Naive thymus-derived CD4-positive, alpha-beta T cell (primary cell): ENCODE measurements at regions of chr16 and their contacts with region 1.

Region 1: GRCh38 chr16:53457670-53458069 is 23.4 kb downstream of the RBL2 start:
- DNase-seq: peak; percentile 13 to 94 (median 89)
- ATAC-seq: peak; percentile 91
- H3K4me3 ChIP-seq: peak overlapping the region; percentile 38
- H3K4me3 Mint-ChIP-seq: peak overlapping the region; percentile 80 to 93 (median 88)
- H3K27ac ChIP-seq: peak overlapping the region; percentile 65
- H3K27ac Mint-ChIP-seq: peak overlapping the region; percentile 88 to 99 (median 96)
- H3K4me1 ChIP-seq: peaks cover 79 to 81% of the 10 kb centered on the region in 2 donors
- H3K4me1 Mint-ChIP-seq: peaks cover 57 to 100% (median 89%) of the 10 kb centered on the region in 7 donors
- H3K27me3 ChIP-seq: no peaks in the 10 kb centered on the region
- H3K27me3 Mint-ChIP-seq: peaks cover 0 to 2% (median 0%) of the 10 kb centered on the region in 5 donors

Region 2: DNA sequence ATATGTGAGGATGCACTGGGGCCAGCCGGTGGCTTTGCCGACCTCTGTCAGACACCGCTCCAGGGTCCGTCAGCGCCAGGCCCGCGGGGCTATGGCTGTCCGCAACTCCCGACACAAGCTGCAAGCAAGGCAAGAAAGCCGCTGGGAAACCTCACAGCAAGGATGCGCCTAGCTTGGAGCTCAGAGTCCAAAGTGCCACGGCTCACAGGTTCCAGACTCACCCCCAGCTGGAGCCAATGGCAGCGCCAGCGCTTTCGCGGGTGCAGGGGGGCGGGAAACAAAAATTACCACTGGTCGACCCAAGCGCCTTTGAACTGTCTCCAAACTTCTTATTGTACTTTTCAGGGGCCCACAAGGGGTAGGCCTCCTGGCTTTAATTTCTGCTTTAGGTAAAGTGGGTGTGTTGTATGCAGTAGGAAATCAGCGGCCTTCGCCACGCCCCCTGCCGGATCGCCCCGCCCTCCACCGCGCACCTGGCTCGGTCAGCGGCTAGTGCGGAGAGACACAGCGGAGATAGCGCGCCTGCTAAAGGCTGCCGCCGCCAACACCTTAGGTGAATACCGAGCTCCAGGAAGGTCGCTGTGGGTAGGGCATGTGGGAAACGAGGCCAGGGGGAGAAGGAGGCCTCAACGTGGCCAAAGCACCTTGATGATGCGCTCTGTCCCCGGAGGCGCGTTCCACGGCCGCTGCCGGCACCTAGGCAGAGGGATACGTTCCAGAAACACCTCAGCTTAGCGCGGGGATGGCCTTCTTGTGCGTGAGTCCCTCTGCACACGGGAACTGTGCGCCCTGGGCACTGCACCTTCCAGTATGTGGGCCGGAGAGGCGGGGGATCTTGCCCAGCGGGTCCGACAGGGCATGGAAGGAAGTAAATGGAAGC is 84.4 kb before region 1 on chr16:
- CTCF ChIA-PET with region 1: no interaction called
- POLR2A ChIA-PET with region 1: interaction called, 8 read pairs
- intact Hi-C with region 1: loop called in 1 of 2 experiments (anchors 1 kb)
- DNase-seq: peak; percentile 64 to 87 (median 84)
- ATAC-seq: peak; percentile 96
- H3K4me3 ChIP-seq: peak overlapping the region; percentile 84
- H3K4me3 Mint-ChIP-seq: peak overlapping the region in 1 of 10 donors; percentile 86
- H3K27ac ChIP-seq: peak overlapping the region; percentile 67
- H3K27ac Mint-ChIP-seq: peak overlapping the region in 8 of 9 donors; percentile 48 to 95 (median 88)
- H3K4me1 ChIP-seq: peaks cover 4 to 7% of the 10 kb centered on the region in 2 donors
- H3K4me1 Mint-ChIP-seq: peaks cover 11 to 44% (median 20%) of the 10 kb centered on the region in 7 donors
- H3K27me3 ChIP-seq: no peaks in the 10 kb centered on the region
- H3K27me3 Mint-ChIP-seq: peaks cover 0 to 32% (median 0%) of the 10 kb centered on the region in 5 donors

Region 3: DNA sequence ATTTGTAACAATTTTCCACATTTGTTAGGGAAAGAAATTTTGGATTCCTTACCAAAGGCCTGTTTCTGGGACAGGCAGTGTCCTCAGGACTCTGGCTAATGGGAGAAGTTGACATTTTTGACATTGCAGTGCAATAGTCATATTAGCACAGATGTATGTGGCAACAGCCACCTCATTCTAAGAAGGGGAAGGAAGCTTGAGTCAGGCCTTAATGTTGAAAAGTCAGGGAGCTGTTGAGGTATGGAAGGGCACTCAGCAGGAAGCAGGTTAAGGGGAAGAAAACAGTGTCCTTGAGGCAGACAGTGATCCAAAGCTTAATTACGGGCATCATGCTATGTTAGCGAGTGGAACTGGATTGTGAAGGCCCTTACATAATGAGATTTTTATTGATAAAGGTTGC is 24.5 kb after region 1 on chr16:
- CTCF ChIA-PET with region 1: no interaction called
- POLR2A ChIA-PET with region 1: interaction called, 19 read pairs
- intact Hi-C with region 1: no loop called
- DNase-seq: no peak
- ATAC-seq: peak; percentile 86
- H3K4me3 ChIP-seq: no peak overlapping the region
- H3K4me3 Mint-ChIP-seq: peak overlapping the region in 2 of 10 donors; percentile 32 to 33
- H3K27ac ChIP-seq: no peak overlapping the region
- H3K27ac Mint-ChIP-seq: peak overlapping the region in 8 of 9 donors; percentile 36 to 90 (median 78)
- H3K4me1 ChIP-seq: peaks cover 3 to 4% of the 10 kb centered on the region in 2 donors
- H3K4me1 Mint-ChIP-seq: peaks cover 15 to 64% (median 38%) of the 10 kb centered on the region in 7 donors
- H3K27me3 ChIP-seq: no peaks in the 10 kb centered on the region
- H3K27me3 Mint-ChIP-seq: no peaks in the 10 kb centered on the region

Region 4: DNA sequence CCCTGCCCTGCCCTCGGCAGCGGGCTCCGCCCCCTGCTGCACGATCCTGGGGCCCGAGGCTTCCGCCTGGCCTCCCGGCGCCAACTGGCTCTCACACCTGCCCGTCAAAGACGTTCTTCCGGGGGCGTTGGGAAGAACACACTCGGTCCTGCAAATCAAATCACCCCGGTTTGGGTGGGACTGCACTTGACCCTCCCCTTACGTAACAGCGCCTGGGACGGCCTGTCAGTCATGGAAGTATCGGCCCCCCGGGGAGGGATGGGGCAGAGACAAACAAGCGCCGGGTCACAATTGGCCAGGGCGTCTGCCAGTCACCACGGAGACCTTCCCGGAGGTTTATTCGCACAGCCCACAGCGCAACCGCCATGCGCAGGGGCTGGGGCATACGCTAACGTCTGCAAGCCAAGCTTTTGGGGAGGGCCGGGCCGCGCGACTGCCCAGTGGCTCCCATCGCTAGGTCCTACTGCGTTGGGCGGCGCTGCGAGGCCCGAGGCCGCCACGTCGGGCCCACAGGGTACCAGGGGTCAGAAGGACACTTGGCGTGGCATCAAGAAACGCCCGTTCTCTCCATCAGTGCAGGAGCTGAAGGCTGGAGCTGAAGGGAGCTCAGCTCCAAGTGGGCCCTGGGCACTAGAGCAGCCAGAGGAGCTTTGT is 45.7 kb after region 1 on chr16:
- CTCF ChIA-PET with region 1: no interaction called
- POLR2A ChIA-PET with region 1: interaction called, 85 read pairs
- intact Hi-C with region 1: loop called (anchors 1 kb)
- DNase-seq: peak; percentile 94 to 100 (median 100)
- ATAC-seq: peak; percentile 94
- H3K4me3 ChIP-seq: peak overlapping the region; percentile 66
- H3K4me3 Mint-ChIP-seq: peak overlapping the region; percentile 86 to 97 (median 94)
- H3K27ac ChIP-seq: peak overlapping the region; percentile 79
- H3K27ac Mint-ChIP-seq: peak overlapping the region; percentile 82 to 98 (median 92)
- H3K4me1 ChIP-seq: peaks cover 25 to 38% of the 10 kb centered on the region in 2 donors
- H3K4me1 Mint-ChIP-seq: peaks cover 36 to 54% (median 45%) of the 10 kb centered on the region in 7 donors
- H3K27me3 ChIP-seq: no peaks in the 10 kb centered on the region
- H3K27me3 Mint-ChIP-seq: no peaks in the 10 kb centered on the region

Region 5: GRCh38 chr16:53703590-53704444 is 246.1 kb after region 1 on chr16 and contains the starts of genes FTO and RPGRIP1L:
- CTCF ChIA-PET with region 1: no interaction called
- POLR2A ChIA-PET with region 1: no interaction called
- intact Hi-C with region 1: loop called in 1 of 2 experiments (anchors 5 kb)
- DNase-seq: peak; percentile 85 to 97 (median 93)
- ATAC-seq: peak; percentile 95
- H3K4me3 ChIP-seq: peak within 1 kb of the TSS; percentile 78
- H3K4me3 Mint-ChIP-seq: peak within 1 kb of the TSS; percentile 85 to 100 (median 98)
- H3K27ac ChIP-seq: peak within 1 kb of the TSS; percentile 66
- H3K27ac Mint-ChIP-seq: peak within 1 kb of the TSS; percentile 90 to 99 (median 95)
- H3K4me1 ChIP-seq: peaks cover 15 to 16% of the 10 kb centered on the region in 2 donors
- H3K4me1 Mint-ChIP-seq: peaks cover 17 to 48% (median 42%) of the 10 kb centered on the region in 7 donors
- H3K27me3 ChIP-seq: no peaks in the 10 kb centered on the region
- H3K27me3 Mint-ChIP-seq: no peaks in the 10 kb centered on the region
- total RNA-seq, gene FTO: 47.2 to 63.5 (median 57.9) TPM
- total RNA-seq, gene RPGRIP1L: 2.0 to 6.1 (median 3.6) TPM